ENCODE measurements at regions of chr1 and their contacts with region 1.

Region 1: DNA sequence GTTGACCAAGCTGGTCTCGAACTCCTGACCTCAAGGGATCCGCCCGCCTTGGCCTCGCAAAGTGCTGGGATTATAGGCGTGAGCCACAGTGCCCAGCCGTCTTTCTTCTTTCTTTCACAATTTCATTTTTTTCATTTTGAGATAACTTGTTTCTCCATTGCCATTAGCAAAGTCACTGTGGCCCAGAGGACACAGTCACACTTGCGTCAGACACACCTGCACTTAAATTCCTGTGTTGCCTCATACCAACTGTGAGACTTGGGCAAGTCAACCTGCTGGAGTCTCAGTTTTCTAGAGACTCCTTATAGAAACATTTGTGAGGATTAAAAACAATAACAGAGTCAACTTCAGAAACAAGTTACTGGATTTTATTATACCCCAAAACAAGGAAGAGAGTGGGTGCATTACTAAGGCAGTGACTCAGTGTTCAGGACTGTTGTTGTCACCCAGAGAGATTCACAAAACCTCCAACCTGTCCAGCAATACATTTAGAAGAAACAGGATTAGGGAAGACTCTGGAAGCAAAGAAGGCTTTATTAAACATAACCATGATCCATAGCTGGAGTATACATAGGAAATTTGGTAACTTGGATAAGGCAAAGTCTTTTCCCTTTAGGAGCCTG is 2.6 kb downstream of the TEDDM1 start:
- DNase-seq: peak; percentile 58 to 95
- H3K4me3 ChIP-seq: no peak overlapping the region
- H3K27ac ChIP-seq: peak overlapping the region; percentile 89
- H3K4me1 ChIP-seq: peaks cover 25% of the 10 kb centered on the region
- H3K27me3 ChIP-seq: no peaks in the 10 kb centered on the region
- CTCF ChIP-seq: no peak

Region 2: DNA sequence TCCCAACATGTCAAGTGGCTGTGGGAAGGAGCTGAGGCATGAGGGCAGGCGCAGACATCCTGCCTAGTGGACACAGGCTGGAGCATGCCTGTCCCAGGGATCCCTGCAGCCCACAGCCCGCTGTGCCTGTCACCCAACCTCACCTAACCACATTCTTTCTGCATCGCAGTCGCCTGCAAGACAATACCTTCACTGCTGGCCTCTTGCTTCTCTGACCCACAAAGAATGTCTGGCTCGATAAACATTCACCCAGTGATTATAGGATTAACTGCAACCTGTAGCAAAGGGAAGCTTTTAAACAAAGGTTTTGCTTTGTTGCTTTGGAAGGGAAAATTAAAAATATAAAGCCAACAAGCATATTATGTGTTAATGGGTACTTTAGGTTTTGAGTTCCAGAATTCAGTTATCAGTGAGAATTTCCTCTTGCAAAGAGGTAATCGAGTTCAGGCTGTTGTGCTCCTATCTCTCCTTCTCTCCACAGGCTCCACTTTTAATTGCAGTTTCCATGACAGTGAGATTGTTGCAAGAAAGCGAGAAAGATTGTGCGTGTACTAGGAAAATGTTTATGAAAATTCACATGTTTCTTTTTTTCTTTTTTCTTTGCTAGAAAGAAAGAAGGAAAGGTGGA is 296.4 kb before region 1 on chr1:
- CTCF ChIA-PET with region 1: no interaction called
- POLR2A ChIA-PET with region 1: no interaction called
- intact Hi-C with region 1: loop called (anchors 1 kb)
- DNase-seq: peak; percentile 91 to 95
- H3K4me3 ChIP-seq: peak overlapping the region; percentile 0; the same call in 1 of the 2 replicates
- H3K27ac ChIP-seq: peak overlapping the region; percentile 54
- H3K4me1 ChIP-seq: peaks cover 24% of the 10 kb centered on the region
- H3K27me3 ChIP-seq: no peaks in the 10 kb centered on the region
- CTCF ChIP-seq: no peak

Region 3: GRCh38 chr1:182476625-182477024 is 78.7 kb after region 1 on chr1:
- CTCF ChIA-PET with region 1: no interaction called
- POLR2A ChIA-PET with region 1: no interaction called
- intact Hi-C with region 1: no loop called
- DNase-seq: no peak
- H3K4me3 ChIP-seq: no peak overlapping the region
- H3K27ac ChIP-seq: no peak overlapping the region
- H3K4me1 ChIP-seq: no peaks in the 10 kb centered on the region
- H3K27me3 ChIP-seq: peaks cover 15% of the 10 kb centered on the region
- CTCF ChIP-seq: no peak

Region 4: DNA sequence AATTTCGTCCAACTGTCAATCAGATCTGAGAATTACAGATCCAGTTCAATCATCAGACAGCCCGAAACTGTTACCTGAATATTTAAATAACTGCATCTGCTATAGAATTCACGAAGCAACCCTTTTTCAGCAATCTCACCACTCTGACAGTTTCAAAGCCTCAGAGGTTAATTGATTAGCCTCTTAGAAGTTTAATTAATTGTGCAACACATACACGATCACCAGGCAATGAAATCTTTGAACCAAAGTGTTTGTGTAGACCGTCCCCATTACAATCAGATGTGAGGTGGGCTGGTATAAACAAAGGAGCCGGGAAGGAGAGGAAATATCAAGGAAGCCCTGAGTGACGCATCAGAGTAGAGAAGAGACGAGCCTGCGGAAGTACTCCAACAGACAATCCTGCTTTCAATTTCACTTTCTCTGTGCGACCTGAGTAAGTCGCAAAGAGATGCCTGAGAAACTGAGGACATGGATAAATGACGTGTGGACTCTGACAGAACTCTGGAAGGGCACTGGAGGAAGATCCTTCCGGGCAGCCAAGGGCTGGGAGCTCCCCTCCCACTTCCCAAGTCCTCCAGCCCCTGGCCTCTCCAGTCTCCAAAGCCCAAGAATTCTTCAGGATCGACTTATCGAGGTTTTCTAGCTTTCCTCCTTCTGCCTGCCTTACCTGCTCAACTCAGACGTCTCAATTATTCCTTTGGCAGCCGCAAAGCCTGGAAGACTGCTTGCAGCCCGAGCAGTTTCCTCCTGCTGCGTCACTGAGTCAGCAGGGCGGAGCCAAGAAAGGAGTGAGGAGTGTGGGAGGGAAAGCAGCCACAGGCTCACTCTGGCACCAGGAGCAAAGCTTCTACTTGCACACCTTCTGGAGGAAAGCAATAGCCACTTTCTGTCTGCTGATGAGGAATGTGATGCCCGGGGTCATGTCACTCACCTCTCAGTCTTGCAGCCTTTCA is 190.9 kb after region 1 on chr1 and contains the start of gene RNASEL:
- CTCF ChIA-PET with region 1: no interaction called
- POLR2A ChIA-PET with region 1: no interaction called
- intact Hi-C with region 1: loop called (anchors 5 kb)
- DNase-seq: peak; percentile 69 to 78
- H3K4me3 ChIP-seq: peak within 1 kb of the TSS; percentile 64
- H3K27ac ChIP-seq: peak within 1 kb of the TSS; percentile 69
- H3K4me1 ChIP-seq: peaks cover 12% of the 10 kb centered on the region
- H3K27me3 ChIP-seq: no peaks in the 10 kb centered on the region
- CTCF ChIP-seq: no peak
- total RNA-seq, gene RNASEL: 4.9 and 6.3 TPM in 2 replicates

Region 5: DNA sequence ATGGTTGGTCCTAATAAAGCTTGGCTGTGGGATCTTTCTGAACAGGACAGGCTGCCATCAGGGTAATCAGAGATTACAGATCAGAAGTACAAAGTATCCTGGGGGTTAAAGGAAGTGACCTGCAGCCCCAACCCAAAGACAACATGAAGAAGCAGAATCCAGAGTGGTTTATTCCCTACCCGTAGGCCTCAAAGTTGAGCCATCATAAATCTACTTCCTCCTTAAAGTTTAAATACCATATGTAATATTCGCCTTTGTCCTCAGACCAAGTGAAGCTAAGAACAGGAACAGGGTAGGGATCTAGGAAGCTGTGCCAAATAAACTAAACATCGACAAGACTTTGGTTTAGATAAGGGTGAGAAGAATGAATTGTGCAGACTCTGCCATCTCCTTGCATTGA is 425.3 kb after region 1 on chr1:
- CTCF ChIA-PET with region 1: no interaction called
- POLR2A ChIA-PET with region 1: no interaction called
- intact Hi-C with region 1: no loop called
- DNase-seq: no peak
- H3K4me3 ChIP-seq: no peak overlapping the region
- H3K27ac ChIP-seq: no peak overlapping the region
- H3K4me1 ChIP-seq: no peaks in the 10 kb centered on the region
- H3K27me3 ChIP-seq: no peaks in the 10 kb centered on the region
- CTCF ChIP-seq: no peak